OCI-LY7 (cell line): ENCODE measurements at regions of chr11 and their contacts with region 1.

Region 1: DNA sequence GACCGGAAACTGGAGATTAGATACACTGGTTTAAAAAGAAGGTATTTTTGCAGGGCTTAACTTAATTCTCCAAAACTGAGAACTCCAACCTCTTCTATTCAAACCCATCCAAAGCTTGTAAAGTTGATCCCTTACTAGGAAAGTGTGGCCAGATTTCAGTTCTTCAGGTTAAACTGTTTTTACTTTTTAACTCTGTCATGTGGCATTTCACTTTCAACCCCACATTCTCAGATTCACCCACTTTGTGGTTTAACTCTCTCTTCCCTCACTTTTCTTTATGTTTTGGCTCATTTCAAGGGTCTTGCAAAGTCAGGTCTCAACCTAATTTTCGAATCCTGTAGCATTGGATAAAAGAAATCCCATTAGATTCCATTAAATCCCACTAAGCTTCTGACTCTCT is 75.4 kb downstream of the MPPED2 start:
- DNase-seq: no peak
- H3K4me3 ChIP-seq: no peak overlapping the region
- H3K27ac ChIP-seq: no peak overlapping the region
- H3K4me1 ChIP-seq: no peaks in the 10 kb centered on the region
- CTCF ChIP-seq: no peak

Region 2: GRCh38 chr11:30561691-30562415 is 51.1 kb after region 1 on chr11:
- CTCF ChIA-PET with region 1: no interaction called
- POLR2A ChIA-PET with region 1: no interaction called
- intact Hi-C with region 1: loop called (anchors 1 kb)
- DNase-seq: no peak
- H3K4me3 ChIP-seq: no peak overlapping the region
- H3K27ac ChIP-seq: no peak overlapping the region
- H3K4me1 ChIP-seq: no peaks in the 10 kb centered on the region
- CTCF ChIP-seq: no peak